CD8-positive, alpha-beta T cell (primary cell): ENCODE measurements at regions of chr2 and their contacts with region 1.

Region 1: GRCh38 chr2:101781791-101782426 is 84.4 kb downstream of the MAP4K4 start:
- DNase-seq: no peak
- ATAC-seq: no peak
- H3K4me3 ChIP-seq: no peak overlapping the region
- H3K4me3 Mint-ChIP-seq: no peak overlapping the region
- H3K27ac ChIP-seq: no peak overlapping the region
- H3K27ac Mint-ChIP-seq: peak overlapping the region; percentile 47
- H3K4me1 ChIP-seq: peaks cover 59% of the 10 kb centered on the region
- H3K4me1 Mint-ChIP-seq: peaks cover 86% of the 10 kb centered on the region
- H3K27me3 ChIP-seq: no peaks in the 10 kb centered on the region
- H3K27me3 Mint-ChIP-seq: no peaks in the 10 kb centered on the region
- CTCF ChIP-seq: no peak

Region 2: DNA sequence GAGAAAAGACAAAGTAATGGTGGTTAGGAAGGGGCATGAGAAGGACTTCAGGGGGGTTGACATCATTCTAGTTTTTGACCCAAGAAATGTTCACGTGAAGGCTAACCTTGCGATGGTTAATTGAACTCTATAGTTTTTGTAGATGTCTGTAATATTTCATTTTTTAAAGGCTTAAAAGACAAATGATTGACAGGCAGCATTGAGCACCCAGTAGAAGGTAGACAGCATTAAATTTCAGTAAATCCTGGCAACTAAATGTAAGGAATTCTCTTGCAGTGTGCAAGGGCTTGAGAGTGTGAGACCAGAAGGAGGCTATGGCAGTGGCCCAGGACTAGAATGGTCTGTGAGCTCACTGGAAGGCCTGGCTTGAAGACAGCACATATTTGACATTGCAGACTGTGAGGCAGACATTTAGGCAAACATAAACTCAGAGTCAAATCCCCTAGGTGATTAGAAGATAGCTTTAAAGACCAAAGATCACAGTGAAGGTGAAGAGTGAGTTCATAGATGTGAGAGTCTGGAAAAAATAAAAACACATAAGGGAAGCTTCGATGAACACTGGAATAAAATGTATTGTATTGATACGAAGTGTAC is 184.5 kb before region 1 on chr2:
- CTCF ChIA-PET with region 1: no interaction called
- POLR2A ChIA-PET with region 1: no interaction called
- intact Hi-C with region 1: no loop called
- DNase-seq: no peak
- ATAC-seq: no peak
- H3K4me3 ChIP-seq: no peak overlapping the region
- H3K4me3 Mint-ChIP-seq: no peak overlapping the region
- H3K27ac ChIP-seq: no peak overlapping the region
- H3K27ac Mint-ChIP-seq: no peak overlapping the region
- H3K4me1 ChIP-seq: no peaks in the 10 kb centered on the region
- H3K4me1 Mint-ChIP-seq: peaks cover 10% of the 10 kb centered on the region
- H3K27me3 ChIP-seq: no peaks in the 10 kb centered on the region
- H3K27me3 Mint-ChIP-seq: no peaks in the 10 kb centered on the region
- CTCF ChIP-seq: no peak

Region 3: DNA sequence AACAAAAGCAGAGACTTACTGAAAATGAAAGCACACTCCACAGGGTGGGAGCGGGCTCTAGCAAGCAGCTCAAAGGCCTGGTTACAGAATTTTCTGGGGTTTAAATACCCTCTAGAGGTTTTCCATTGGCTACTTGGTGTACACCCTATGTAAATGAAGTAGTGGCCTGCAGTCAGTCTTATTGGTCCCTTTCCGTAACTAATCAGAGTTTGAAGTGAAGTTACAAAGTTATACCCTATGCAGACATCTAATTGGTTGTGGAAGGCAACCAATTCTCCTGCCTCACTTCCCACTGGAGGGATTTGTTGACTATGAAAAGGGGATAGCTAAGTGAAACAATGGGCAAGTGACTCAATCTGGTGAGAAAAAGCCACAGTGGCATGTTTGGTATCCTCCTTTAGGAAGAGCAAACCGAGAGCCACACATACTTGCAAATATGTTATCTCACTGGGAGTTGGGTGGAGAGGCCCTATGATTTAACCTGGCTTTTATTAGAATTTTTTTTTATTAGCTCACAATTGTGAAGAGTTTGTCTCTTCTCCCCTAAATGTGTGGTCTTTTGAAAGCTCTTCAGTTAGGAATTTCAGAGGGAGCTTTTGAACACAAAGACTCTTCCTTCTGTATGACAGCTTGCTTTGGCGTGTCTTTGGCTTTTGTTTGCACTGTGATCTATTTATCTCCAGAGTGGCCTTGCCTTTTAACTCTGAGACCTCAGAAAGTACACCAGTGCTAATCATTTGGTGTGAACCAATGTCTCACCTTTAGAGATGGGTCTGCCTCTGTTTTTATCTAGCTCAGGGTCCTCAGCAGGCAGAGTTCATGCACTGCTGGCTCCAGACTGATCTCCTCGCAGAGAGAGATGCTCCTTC is 14.8 kb before region 1 on chr2:
- CTCF ChIA-PET with region 1: interaction called, 4 read pairs
- POLR2A ChIA-PET with region 1: interaction called, 3 read pairs
- intact Hi-C with region 1: loop called in 1 of 2 experiments (anchors 2 kb)
- DNase-seq: no peak
- ATAC-seq: no peak
- H3K4me3 ChIP-seq: no peak overlapping the region
- H3K4me3 Mint-ChIP-seq: peak overlapping the region; percentile 36
- H3K27ac ChIP-seq: no peak overlapping the region
- H3K27ac Mint-ChIP-seq: peak overlapping the region; percentile 74
- H3K4me1 ChIP-seq: peaks cover 79% of the 10 kb centered on the region
- H3K4me1 Mint-ChIP-seq: peaks cover 96% of the 10 kb centered on the region
- H3K27me3 ChIP-seq: no peaks in the 10 kb centered on the region
- H3K27me3 Mint-ChIP-seq: no peaks in the 10 kb centered on the region
- CTCF ChIP-seq: no peak

Region 4: GRCh38 chr2:101831351-101831865 is 49.5 kb after region 1 on chr2:
- CTCF ChIA-PET with region 1: no interaction called
- POLR2A ChIA-PET with region 1: no interaction called
- intact Hi-C with region 1: no loop called
- DNase-seq: peak; percentile 30 to 75 (median 62)
- ATAC-seq: peak; percentile 67
- H3K4me3 ChIP-seq: no peak overlapping the region
- H3K4me3 Mint-ChIP-seq: no peak overlapping the region
- H3K27ac ChIP-seq: no peak overlapping the region
- H3K27ac Mint-ChIP-seq: peak overlapping the region; percentile 5
- H3K4me1 ChIP-seq: peaks cover 47% of the 10 kb centered on the region
- H3K4me1 Mint-ChIP-seq: peaks cover 52% of the 10 kb centered on the region
- H3K27me3 ChIP-seq: no peaks in the 10 kb centered on the region
- H3K27me3 Mint-ChIP-seq: no peaks in the 10 kb centered on the region
- CTCF ChIP-seq: peak; percentile 42